Activated CD4-positive, alpha-beta T cell treated with anti-CD3 and anti-CD28 coated beads, Interleukin-2, amount 10 ng/mL, durations not matched to agents 24 days and 14 days (primary cell): ENCODE measurements at regions of chr20 and their contacts with region 1.

Region 1: DNA sequence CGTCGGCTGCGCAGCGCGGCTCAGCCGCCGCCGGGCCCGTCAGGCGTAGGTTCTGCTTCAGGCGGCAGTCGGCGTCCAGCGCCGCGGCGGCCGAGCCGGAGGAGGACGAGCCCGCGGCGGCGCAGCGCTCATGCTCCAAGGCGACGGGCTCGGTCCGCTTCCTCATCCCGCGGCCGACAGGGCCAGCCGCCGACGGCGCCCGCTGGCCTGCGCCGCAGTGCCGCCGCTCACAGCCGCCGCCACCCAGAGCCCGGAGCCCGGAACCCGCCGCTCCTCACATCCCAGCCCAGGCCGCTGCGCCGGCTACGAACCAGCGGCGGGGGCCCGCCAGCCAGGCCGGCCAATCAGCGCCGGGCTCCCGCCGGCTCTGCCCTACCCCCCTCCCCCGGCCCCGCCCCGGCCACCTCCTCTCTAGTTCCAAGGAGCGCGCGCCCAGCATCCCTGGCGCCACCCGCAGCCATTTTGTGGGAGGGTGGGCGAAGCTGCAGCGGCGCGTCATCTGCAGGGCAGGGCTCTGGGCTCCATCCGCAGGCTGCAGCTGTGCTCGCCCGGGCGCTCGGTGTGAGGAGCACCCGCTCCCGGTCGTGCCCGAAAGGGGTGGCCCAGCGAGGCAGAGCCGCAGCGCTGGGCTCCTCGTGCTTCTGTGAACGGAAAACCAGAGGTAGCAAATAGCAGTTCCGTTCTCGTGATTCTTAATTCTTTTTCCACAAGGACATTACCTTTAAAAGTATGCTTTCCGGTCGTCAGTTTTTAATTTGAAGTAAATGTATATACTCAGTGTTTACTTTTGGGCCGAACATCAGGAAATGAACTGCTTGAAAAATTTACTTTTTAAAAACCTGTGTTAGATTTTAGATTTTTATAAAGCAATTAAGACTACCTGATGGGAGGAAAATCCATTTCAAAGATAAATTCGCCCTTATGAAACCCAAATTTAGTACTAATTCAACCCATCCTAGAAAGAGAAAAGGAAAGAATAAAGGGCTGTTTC is at the start of gene ABHD12:
- DNase-seq: peak; percentile 98
- H3K4me3 Mint-ChIP-seq: peak within 1 kb of the TSS; percentile 90
- H3K27ac Mint-ChIP-seq: peak within 1 kb of the TSS; percentile 94
- H3K4me1 Mint-ChIP-seq: peaks cover 16% of the 10 kb centered on the region
- H3K27me3 Mint-ChIP-seq: no peaks in the 10 kb centered on the region
- total RNA-seq, gene ABHD12: 28.7 and 30.0 TPM in 2 replicates

Region 2: DNA sequence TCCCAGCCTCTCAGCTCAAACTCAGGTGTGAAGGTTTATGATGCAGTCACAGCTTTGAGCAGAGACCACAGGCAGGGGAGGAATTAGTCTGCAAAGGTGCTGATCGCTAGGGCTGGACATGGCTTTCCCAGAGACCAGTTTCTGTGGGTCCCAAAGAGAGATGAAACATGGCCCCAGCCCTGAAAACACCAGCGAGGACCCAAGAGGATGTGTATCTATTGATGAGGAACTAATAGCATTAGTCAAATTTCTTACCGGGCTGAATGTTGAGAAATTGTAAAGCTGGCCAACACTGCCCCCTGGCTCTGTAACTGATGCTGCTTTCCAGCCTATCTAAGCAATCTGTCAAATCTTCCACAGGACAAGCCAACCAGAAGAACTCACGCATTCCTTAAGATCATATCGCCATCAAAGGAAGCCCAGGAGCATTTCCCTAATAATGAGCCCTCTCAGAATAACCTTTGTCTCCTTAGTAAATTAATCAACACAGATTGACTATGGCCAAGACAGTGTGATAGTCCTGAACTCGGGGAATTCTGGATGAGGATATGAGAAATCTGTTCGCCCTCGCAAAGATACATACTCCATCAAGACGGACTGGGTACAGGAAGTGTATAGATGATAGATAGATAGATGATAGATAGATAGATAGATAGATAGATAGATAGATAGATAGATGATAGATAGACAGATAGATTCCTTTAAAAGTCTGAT is 325.1 kb before region 1 on chr20:
- intact Hi-C with region 1: loop called (anchors 2 kb)
- DNase-seq: peak; percentile 89
- H3K4me3 Mint-ChIP-seq: no peak overlapping the region
- H3K27ac Mint-ChIP-seq: no peak overlapping the region
- H3K4me1 Mint-ChIP-seq: peaks cover 3% of the 10 kb centered on the region
- H3K27me3 Mint-ChIP-seq: peaks cover 50% of the 10 kb centered on the region

Region 3: GRCh38 chr20:25247956-25248785 is 142.7 kb before region 1 on chr20 and contains the start of gene PYGB:
- intact Hi-C with region 1: loop called (anchors 1 kb)
- DNase-seq: peak; percentile 92
- H3K4me3 Mint-ChIP-seq: peak within 1 kb of the TSS; percentile 91
- H3K27ac Mint-ChIP-seq: peak within 1 kb of the TSS; percentile 90
- H3K4me1 Mint-ChIP-seq: peaks cover 32% of the 10 kb centered on the region
- H3K27me3 Mint-ChIP-seq: peaks cover 7% of the 10 kb centered on the region
- total RNA-seq, gene PYGB: 36.0 and 36.6 TPM in 2 replicates

Region 4: GRCh38 chr20:25341716-25342680 is 48.8 kb before region 1 on chr20:
- intact Hi-C with region 1: no loop called
- DNase-seq: no peak
- H3K4me3 Mint-ChIP-seq: no peak overlapping the region
- H3K27ac Mint-ChIP-seq: no peak overlapping the region
- H3K4me1 Mint-ChIP-seq: peaks cover 29% of the 10 kb centered on the region
- H3K27me3 Mint-ChIP-seq: no peaks in the 10 kb centered on the region

Region 5: DNA sequence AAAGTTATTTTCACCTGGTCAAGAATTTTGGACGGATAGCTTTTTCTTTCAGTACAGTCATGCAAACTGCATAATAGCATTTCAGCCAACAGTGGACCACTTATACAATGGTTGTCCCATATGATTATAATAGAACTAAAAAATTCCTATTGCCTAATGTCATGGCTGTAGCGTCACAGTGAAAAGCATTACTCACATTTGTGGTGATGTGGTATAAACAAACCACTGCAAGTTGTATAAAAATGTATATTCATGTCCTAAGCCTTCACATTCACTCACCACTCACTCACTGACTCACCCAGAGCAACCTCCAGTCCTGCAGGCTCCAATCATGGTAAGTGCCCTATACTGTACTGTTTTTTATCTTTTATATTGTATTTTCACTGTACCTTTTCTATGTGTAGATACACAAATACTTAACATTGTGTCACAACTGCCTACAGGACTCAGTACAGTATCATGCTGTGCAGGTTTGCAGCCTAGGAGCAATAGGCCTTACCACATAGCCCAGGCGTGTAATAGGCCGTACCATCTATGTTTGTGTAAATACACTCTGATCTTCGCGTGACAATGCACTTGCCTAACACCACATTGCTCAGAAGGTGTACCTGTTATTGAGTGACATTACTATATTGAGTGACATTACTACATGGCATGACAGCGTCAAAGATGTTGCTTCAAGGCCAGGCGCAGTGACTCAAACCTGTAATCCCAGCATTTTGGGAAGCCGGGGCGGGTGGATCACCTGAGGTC is 18.1 kb before region 1 on chr20:
- intact Hi-C with region 1: loop called (anchors 2 kb)
- DNase-seq: no peak
- H3K4me3 Mint-ChIP-seq: no peak overlapping the region
- H3K27ac Mint-ChIP-seq: no peak overlapping the region
- H3K4me1 Mint-ChIP-seq: peaks cover 15% of the 10 kb centered on the region
- H3K27me3 Mint-ChIP-seq: no peaks in the 10 kb centered on the region

Region 6: GRCh38 chr20:25623736-25624499 is 233.1 kb after region 1 on chr20 and contains the start of gene NANP:
- intact Hi-C with region 1: loop called (anchors 5 kb)
- DNase-seq: peak; percentile 96
- H3K4me3 Mint-ChIP-seq: peak within 1 kb of the TSS; percentile 85
- H3K27ac Mint-ChIP-seq: peak within 1 kb of the TSS; percentile 98
- H3K4me1 Mint-ChIP-seq: peaks cover 30% of the 10 kb centered on the region
- H3K27me3 Mint-ChIP-seq: no peaks in the 10 kb centered on the region
- total RNA-seq, gene NANP: 10.0 TPM in 2 replicates